IMR-90 (cell line): ENCODE measurements at regions of chr3 and their contacts with region 1.

Region 1: GRCh38 chr3:134600685-134601463 is 49.9 kb downstream of the KY start:
- DNase-seq: peak; percentile 58
- ATAC-seq: peak; percentile 92
- H3K4me3 ChIP-seq: no peak overlapping the region
- H3K27ac ChIP-seq: no peak overlapping the region
- H3K4me1 ChIP-seq: peaks cover 3% of the 10 kb centered on the region; the same call in 1 of the 2 replicates
- H3K27me3 ChIP-seq: peaks cover 15% of the 10 kb centered on the region
- CTCF ChIP-seq: peak; percentile 98
- POLR2A ChIP-seq: no peak
- RAD21 ChIP-seq: peak; percentile 94

Region 2: DNA sequence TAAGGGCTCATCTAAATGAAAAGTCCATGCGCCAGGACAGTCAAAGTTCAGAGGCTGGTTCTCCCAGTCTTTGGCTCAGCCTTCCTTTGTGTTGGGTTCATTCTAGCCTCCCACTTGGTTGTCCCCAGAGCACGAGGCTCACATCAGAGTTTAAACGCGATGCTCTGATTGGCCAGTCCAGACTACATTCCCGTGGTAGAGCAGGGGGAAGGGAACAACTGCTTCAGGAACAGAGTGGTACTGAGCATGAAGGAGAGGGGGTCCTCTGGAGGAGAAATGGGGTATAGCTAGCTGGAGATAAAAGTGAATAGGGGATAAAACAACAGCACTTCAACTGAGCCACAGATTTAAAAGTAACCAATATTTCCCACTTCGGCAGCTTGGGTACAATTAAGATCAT is 147.2 kb before region 1 on chr3:
- CTCF ChIA-PET with region 1: no interaction called
- POLR2A ChIA-PET with region 1: no interaction called
- dilution Hi-C with region 1: no loop called
- in situ Hi-C with region 1: no loop called
- intact Hi-C with region 1: no loop called
- DNase-seq: no peak
- ATAC-seq: no peak
- H3K4me3 ChIP-seq: no peak overlapping the region
- H3K27ac ChIP-seq: no peak overlapping the region
- H3K4me1 ChIP-seq: peaks cover 1% of the 10 kb centered on the region; the same call in 1 of the 2 replicates
- H3K27me3 ChIP-seq: no peaks in the 10 kb centered on the region
- CTCF ChIP-seq: peak; percentile 28; the same call in 1 of the 2 replicates
- POLR2A ChIP-seq: no peak
- RAD21 ChIP-seq: peak; percentile 27; the same call in 1 of the 2 replicates

Region 3: GRCh38 chr3:134640872-134641470 is 40.1 kb after region 1 on chr3:
- CTCF ChIA-PET with region 1: interaction called, 8 read pairs
- POLR2A ChIA-PET with region 1: no interaction called
- dilution Hi-C with region 1: no loop called
- in situ Hi-C with region 1: no loop called
- intact Hi-C with region 1: loop called (anchors 1 kb)
- DNase-seq: peak; percentile 49
- ATAC-seq: peak; percentile 84
- H3K4me3 ChIP-seq: no peak overlapping the region
- H3K27ac ChIP-seq: no peak overlapping the region
- H3K4me1 ChIP-seq: no peaks in the 10 kb centered on the region
- H3K27me3 ChIP-seq: peaks cover 16% of the 10 kb centered on the region; the same call in 1 of the 2 replicates
- CTCF ChIP-seq: peak; percentile 57
- POLR2A ChIP-seq: no peak
- RAD21 ChIP-seq: peak; percentile 44

Region 4: DNA sequence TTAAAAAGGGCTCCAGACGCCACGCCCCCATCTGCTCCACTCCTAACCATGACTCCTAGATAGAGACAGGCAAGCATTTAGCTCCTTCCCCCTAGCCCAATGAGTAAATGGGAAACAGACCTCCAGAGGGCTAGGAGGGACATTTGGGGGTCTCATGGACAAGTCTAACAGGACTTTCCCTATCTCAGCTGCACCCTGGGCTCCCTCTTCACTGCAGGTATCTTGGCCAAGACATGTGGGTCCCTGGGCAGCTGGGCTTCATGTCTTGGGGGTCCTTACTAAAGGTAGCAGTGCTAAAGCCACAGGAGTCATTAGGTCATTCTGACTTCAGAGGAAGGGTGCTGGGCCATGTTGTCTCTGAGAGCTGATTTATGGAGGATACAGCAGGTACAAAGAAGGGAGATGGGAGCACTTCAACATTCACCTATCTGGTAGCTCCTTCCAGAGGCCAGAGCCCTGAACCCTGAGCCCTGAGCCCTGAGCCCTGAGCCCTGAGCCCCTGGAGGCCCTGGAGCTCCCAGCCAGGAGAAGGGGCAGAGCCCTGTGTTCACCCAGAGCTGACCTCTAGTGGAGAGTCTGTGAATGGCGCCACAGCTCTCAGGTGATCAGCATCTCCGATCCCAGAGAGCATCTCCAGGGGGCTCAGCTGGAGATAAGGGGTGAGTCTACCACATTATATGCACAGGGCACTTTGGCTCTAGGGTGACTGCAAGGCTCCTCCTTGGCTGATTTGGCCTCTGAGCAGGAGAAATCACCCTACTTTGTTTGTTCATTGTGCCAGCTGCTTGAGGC is 154.1 kb after region 1 on chr3:
- CTCF ChIA-PET with region 1: interaction called, 16 read pairs
- POLR2A ChIA-PET with region 1: no interaction called
- dilution Hi-C with region 1: no loop called
- in situ Hi-C with region 1: loop called (anchors 5 kb)
- intact Hi-C with region 1: loop called (anchors 1 kb)
- DNase-seq: peak; percentile 30
- ATAC-seq: peak; percentile 98
- H3K4me3 ChIP-seq: no peak overlapping the region
- H3K27ac ChIP-seq: no peak overlapping the region
- H3K4me1 ChIP-seq: no peaks in the 10 kb centered on the region
- H3K27me3 ChIP-seq: peaks cover 8% of the 10 kb centered on the region
- CTCF ChIP-seq: peak; percentile 63
- POLR2A ChIP-seq: no peak
- RAD21 ChIP-seq: peak; percentile 60

Region 5: GRCh38 chr3:134794950-134795745 is 194.3 kb after region 1 on chr3 and contains the start of gene EPHB1:
- CTCF ChIA-PET with region 1: interaction called, 6 read pairs
- POLR2A ChIA-PET with region 1: no interaction called
- dilution Hi-C with region 1: no loop called
- in situ Hi-C with region 1: no loop called
- intact Hi-C with region 1: loop called (anchors 1 kb)
- DNase-seq: peak; percentile 87
- ATAC-seq: peak; percentile 93
- H3K4me3 ChIP-seq: peak within 1 kb of the TSS; percentile 47
- H3K27ac ChIP-seq: no peak within 1 kb of the TSS
- H3K4me1 ChIP-seq: peaks cover 1% of the 10 kb centered on the region; the same call in 1 of the 2 replicates
- H3K27me3 ChIP-seq: peaks cover 51% of the 10 kb centered on the region
- CTCF ChIP-seq: peak; percentile 80
- POLR2A ChIP-seq: no peak
- RAD21 ChIP-seq: peak; percentile 83
- total RNA-seq, gene EPHB1: under 0.01 and 0.36 TPM in 2 replicates

Region 6: GRCh38 chr3:135148398-135148797 is 547.5 kb after region 1 on chr3:
- CTCF ChIA-PET with region 1: no interaction called
- POLR2A ChIA-PET with region 1: no interaction called
- dilution Hi-C with region 1: no loop called
- in situ Hi-C with region 1: no loop called
- intact Hi-C with region 1: no loop called
- DNase-seq: no peak
- ATAC-seq: no peak
- H3K4me3 ChIP-seq: no peak overlapping the region
- H3K27ac ChIP-seq: no peak overlapping the region
- H3K4me1 ChIP-seq: no peaks in the 10 kb centered on the region
- H3K27me3 ChIP-seq: no peaks in the 10 kb centered on the region
- CTCF ChIP-seq: no peak
- POLR2A ChIP-seq: no peak
- RAD21 ChIP-seq: no peak

Region 7: GRCh38 chr3:135503760-135504686 is 903.1 kb after region 1 on chr3:
- CTCF ChIA-PET with region 1: interaction called, 3 read pairs
- POLR2A ChIA-PET with region 1: no interaction called
- dilution Hi-C with region 1: no loop called
- in situ Hi-C with region 1: no loop called
- intact Hi-C with region 1: loop called (anchors 5 kb)
- DNase-seq: peak; percentile 51
- ATAC-seq: peak; percentile 95
- H3K4me3 ChIP-seq: no peak overlapping the region
- H3K27ac ChIP-seq: no peak overlapping the region
- H3K4me1 ChIP-seq: no peaks in the 10 kb centered on the region
- H3K27me3 ChIP-seq: peaks cover 3% of the 10 kb centered on the region; the same call in 1 of the 2 replicates
- CTCF ChIP-seq: peak; percentile 60
- POLR2A ChIP-seq: no peak
- RAD21 ChIP-seq: peak; percentile 70

Region 8: GRCh38 chr3:135895106-135895733 is 1294.3 kb after region 1 on chr3:
- CTCF ChIA-PET with region 1: no interaction called
- POLR2A ChIA-PET with region 1: no interaction called
- dilution Hi-C with region 1: no loop called
- in situ Hi-C with region 1: loop called (anchors 10 kb)
- intact Hi-C with region 1: loop called (anchors 1 kb)
- DNase-seq: peak; percentile 79
- ATAC-seq: peak; percentile 78
- H3K4me3 ChIP-seq: no peak overlapping the region
- H3K27ac ChIP-seq: no peak overlapping the region
- H3K4me1 ChIP-seq: peaks cover 8% of the 10 kb centered on the region
- H3K27me3 ChIP-seq: no peaks in the 10 kb centered on the region
- CTCF ChIP-seq: peak; percentile 85
- POLR2A ChIP-seq: no peak
- RAD21 ChIP-seq: peak; percentile 88